ENCODE measurements at regions of chr17 and their contacts with region 1.

Region 1: DNA sequence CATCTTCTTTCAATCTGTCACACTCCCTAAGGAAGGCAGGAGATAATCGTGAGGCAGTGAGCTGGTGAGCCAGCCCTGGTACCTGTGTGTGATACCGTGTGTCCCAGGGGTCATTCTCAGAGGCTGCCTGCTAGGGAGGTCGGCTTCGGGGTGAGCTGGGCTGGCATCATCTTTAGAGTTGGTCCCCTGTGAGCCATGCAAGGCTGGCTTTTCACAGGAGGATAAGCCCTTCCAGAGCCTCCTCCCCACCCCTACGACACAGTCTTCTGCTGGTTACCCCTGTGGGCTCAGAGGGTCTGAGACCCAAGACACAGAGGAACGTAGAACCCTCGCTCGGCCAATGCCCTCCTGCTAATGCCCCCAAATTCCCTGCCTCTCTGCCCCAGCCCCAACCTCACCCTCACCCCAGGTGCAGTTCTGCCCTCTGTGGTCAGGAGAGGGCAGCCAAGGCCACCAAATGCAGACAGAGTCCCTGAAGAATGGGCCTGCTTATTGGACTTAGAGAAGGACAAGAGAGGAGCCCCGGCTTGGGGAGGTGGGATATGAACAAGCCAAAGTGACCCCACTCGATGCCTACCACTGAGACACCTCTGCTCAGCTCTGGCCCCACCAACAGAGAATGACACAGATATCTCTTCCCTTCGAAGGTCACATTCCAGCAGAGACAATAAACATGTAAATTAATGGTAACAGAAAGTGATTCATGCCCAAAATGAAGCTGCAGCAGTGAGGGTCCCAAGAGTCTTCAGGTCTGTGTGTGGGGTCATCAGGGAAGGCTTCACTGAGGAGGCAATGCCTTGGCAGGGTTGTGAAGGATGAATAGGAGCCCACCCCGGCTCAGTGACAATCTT is 80.8 kb upstream of the CCL1 start:
- ATAC-seq: peak in 7 of 8 experiments; percentile 37 to 93 (median 91)
- H3K4me3 ChIP-seq: no peak overlapping the region
- H3K27ac ChIP-seq: no peak overlapping the region
- H3K4me1 ChIP-seq: peaks cover 0 to 35% of the 10 kb centered on the region in 2 donors

Region 2: DNA sequence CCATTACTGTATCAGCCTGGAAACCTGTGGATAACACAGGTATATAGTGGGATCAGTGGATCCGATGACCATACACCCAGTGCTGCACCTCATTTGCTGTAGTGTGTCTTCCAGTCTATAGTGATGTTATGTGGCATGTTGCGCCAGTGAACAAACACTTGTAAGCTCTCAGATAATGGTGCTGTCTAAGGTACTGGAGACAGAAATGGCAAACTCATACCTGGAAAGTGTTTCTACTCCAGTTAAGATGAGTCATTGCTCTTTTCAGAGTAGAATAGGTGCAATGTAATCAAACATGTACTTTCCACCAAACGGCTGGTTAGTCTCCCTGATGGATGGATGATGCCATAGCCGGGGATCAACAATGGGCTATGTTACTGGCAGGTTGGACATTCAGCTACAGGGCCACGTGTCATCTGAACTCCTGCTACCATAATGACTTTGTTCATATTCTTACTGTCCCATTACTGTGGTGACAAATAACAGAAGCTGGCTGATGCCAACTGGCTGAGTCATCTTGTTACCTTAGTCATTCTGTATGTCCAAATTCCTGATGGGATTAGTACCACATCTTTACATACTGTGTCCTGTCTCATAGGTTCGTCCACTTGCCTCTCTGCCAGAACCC is 152.0 kb before region 1 on chr17:
- in situ Hi-C with region 1: no loop called
- ATAC-seq: no peak
- H3K4me3 ChIP-seq: no peak overlapping the region
- H3K27ac ChIP-seq: no peak overlapping the region
- H3K4me1 ChIP-seq: no peaks in the 10 kb centered on the region

Region 3: GRCh38 chr17:34306466-34306865 is 137.4 kb before region 1 on chr17:
- in situ Hi-C with region 1: no loop called
- ATAC-seq: peak in 4 of 8 experiments; percentile 35 to 98 (median 90)
- H3K4me3 ChIP-seq: no peak overlapping the region
- H3K27ac ChIP-seq: no peak overlapping the region
- H3K4me1 ChIP-seq: no peaks in the 10 kb centered on the region

Region 4: GRCh38 chr17:34519282-34519681 is 75.4 kb after region 1 on chr17:
- in situ Hi-C with region 1: loop called in 1 of 9 experiments (anchors 10 kb)
- ATAC-seq: peak; percentile 53 to 86 (median 81)
- H3K4me3 ChIP-seq: no peak overlapping the region
- H3K27ac ChIP-seq: no peak overlapping the region
- H3K4me1 ChIP-seq: peaks cover 15 to 16% of the 10 kb centered on the region in 2 donors

Region 5: DNA sequence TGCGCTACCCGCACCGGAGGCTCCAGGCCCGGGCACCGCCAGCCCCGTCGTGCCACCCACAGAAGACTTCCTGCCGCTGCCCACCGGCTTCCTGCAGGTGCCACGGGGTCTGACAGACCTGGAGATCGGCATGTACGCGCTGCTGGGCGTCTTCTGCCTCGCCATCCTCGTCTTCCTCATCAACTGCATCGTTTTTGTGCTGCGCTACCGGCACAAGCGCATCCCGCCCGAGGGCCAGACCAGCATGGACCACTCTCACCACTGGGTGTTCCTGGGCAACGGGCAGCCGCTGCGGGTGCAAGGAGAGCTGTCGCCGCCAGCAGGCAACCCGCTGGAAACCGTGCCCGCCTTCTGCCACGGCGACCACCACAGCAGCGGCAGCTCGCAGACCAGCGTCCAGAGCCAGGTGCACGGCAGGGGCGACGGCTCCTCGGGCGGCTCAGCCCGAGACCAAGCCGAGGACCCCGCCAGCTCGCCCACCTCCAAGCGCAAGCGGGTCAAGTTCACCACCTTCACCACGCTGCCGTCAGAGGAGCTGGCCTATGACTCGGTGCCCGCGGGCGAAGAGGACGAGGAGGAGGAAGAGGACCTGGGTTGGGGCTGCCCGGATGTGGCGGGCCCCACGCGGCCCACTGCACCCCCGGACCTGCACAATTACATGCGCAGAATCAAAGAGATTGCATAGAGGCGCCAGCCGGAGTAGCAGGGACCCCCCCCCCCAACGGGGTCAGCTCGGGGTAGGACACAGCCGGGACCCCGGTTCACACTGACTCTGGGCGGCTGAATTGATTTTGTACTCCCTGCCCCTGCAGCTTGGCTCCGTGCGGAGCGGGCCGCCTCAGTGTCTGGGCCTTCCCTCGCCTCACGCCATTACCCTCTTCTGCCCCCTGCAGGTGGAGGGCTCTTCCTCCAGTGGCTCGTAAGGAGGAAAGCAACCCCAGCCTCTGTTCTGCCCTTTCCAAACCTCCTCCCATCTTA is 194.0 kb after region 1 on chr17:
- in situ Hi-C with region 1: loop called in 1 of 9 experiments (anchors 25 kb)
- ATAC-seq: peak; percentile 88 to 100 (median 94)
- H3K4me3 ChIP-seq: no peak overlapping the region
- H3K27ac ChIP-seq: no peak overlapping the region
- H3K4me1 ChIP-seq: peaks cover 7 to 13% of the 10 kb centered on the region in 2 donors

Measured in motor neuron (in vitro differentiated cells).